ENCODE measurements at regions of chr6 and their contacts with region 1.

Region 1: GRCh38 chr6:85642774-85643536 is at the start of gene SYNCRIP:
- DNase-seq: peak; percentile 99
- H3K4me3 ChIP-seq: peak within 1 kb of the TSS; percentile 85 to 96
- H3K27ac ChIP-seq: peak within 1 kb of the TSS; percentile 98 to 99
- H3K4me1 ChIP-seq: peaks cover 1 to 7% of the 10 kb centered on the region in 2 donors
- H3K27me3 ChIP-seq: no peaks in the 10 kb centered on the region
- CTCF ChIP-seq: no peak
- POLR2A ChIP-seq: peak; percentile 89 to 96
- total RNA-seq, gene SYNCRIP: 25.1 to 147 (median 106) TPM

Region 2: GRCh38 chr6:85574932-85575598 is 67.9 kb before region 1 on chr6:
- intact Hi-C with region 1: no loop called
- DNase-seq: no peak
- H3K4me3 ChIP-seq: no peak overlapping the region
- H3K27ac ChIP-seq: no peak overlapping the region
- H3K4me1 ChIP-seq: no peaks in the 10 kb centered on the region
- H3K27me3 ChIP-seq: no peaks in the 10 kb centered on the region
- CTCF ChIP-seq: no peak
- POLR2A ChIP-seq: no peak

Region 3: DNA sequence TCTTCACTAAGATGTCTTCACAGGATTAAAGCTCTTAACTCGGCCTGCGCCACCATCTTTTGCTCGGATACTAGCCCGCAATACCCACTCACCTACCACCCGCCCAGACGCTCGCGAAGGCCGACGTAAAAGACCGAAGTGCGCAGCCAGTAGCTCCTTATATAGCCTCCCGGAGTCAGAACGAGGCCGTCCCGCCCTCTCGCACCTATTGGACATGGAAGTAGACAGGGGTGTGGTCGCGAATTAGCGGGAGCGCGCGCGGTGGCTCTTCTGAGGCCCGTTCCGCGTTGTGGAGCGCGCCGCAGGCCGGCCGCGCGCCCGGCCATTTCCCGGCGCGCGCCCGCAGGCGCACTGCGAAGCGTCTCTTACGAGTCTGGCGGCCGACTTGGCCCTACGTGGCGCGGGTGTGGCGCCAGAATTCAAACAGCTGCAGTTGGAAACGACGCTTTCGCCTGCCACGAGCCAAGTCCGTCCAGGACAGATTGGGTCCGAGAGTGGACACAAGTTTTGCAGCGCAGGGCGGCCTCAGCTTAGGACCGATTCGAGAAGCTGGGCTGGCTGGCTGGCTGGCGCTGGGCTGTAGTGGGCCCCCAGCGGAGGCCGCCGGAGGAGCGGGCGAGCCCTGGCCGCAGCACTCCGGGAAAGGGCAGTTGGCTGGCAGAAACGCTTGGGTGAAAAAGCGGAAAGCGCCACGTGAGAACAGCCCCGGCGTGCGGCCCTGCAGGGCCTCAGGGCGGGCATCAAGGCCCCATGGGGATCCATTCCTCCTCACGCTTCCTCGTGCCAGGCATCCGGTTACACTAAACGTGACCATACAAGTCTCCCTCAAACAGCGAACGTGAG is 35.9 kb after region 1 on chr6:
- intact Hi-C with region 1: loop called (anchors 5 kb)
- DNase-seq: peak; percentile 98 to 99
- H3K4me3 ChIP-seq: peak overlapping the region; percentile 70 to 94
- H3K27ac ChIP-seq: peak overlapping the region; percentile 87 to 91
- H3K4me1 ChIP-seq: no peaks in the 10 kb centered on the region
- H3K27me3 ChIP-seq: no peaks in the 10 kb centered on the region
- CTCF ChIP-seq: peak in 1 of 4 experiments; percentile 10
- POLR2A ChIP-seq: peak; percentile 98 to 99

Region 4: GRCh38 chr6:85756982-85757381 is 114.0 kb after region 1 on chr6:
- intact Hi-C with region 1: no loop called
- DNase-seq: no peak
- H3K4me3 ChIP-seq: no peak overlapping the region
- H3K27ac ChIP-seq: no peak overlapping the region
- H3K4me1 ChIP-seq: no peaks in the 10 kb centered on the region
- H3K27me3 ChIP-seq: no peaks in the 10 kb centered on the region
- CTCF ChIP-seq: peak in 2 of 4 experiments; percentile 22 to 25
- POLR2A ChIP-seq: no peak

Measured in uterus (tissue), 4 donors.